ENCODE measurements at regions of chr11 and their contacts with region 1.

Region 1: DNA sequence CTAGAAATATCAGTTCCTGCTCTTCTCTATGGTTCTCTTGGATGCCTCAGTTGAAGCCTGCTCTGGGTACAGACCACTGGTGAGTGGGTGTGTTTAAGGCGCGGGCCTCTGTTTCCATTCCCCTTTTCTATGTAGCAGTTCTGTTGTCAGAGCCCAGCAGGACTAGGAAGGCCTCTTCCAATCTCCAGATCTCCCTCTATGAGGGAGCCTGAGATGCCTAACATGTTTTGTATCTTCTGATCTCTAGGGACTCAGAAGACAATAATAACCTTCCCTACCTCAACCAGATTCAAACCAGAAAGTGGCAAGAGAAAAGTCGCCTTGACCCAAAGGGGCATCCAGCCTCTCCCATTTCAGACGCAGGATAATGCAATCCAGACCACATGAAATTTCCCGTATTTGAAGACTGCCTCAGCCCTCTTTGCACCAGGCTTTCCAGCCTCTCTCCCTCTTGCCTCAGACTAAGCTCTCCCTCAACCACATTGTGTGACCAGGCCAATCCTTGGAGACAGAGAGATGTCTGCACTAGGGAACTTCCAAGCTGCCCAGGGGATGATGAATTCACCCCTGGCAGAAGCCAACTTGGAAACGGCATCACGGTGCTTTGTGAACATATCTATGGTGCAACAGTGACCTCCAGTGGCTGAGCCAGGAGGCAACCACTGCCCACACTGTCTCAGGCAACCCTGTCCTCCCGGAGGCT is 150.1 kb upstream of the UBASH3B start:
- DNase-seq: peak; percentile 60
- CTCF ChIP-seq: peak; percentile 81

Region 2: DNA sequence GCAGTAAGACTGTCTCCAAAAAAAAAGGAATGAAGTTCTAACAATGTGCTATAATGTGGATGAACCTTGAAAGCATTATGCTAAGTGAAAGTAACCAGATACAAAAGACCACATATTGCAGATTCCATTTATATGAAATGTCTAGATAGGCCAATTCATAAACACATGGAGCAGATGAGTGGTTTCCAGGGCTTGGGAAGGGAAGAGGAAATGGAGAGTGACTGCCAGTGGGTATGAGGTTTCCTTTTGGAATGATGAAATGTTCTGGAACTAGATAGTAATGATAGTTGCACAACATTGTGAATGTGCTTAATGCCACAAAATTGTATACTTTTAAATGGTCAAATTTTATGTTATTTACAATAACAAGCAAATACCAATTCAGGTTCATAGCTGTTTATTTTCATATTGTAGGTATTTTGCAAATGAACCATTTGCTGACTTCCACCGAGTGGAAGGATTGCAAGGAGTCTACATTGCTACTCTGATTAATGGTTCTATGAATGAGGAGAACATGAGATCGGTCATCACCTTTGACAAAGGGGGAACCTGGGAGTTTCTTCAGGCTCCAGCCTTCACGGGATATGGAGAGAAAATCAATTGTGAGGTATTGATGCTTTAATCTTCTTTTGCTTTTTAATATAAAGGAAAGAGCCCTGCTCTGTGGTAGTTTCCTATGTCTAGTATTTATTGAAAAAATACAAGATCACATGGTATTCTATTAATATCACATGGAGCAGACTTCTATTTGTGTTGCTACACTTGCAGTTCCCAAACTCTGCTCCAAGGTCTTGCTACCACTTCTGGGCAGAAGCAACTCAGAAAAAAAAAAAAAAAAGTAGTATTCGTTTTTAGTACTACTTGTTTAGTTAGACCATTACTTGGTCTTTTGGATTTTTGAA is 985.0 kb before region 1 on chr11:
- in situ Hi-C with region 1: no loop called
- DNase-seq: no peak
- CTCF ChIP-seq: no peak

Region 3: GRCh38 chr11:122215244-122215992 is 290.0 kb before region 1 on chr11:
- in situ Hi-C with region 1: loop called (anchors 10 kb)
- DNase-seq: peak; percentile 70
- CTCF ChIP-seq: peak; percentile 82

Region 4: GRCh38 chr11:122769126-122769780 is 263.8 kb after region 1 on chr11:
- in situ Hi-C with region 1: no loop called
- DNase-seq: no peak
- CTCF ChIP-seq: no peak